ENCODE measurements at regions of chr7 and their contacts with region 1.

Region 1: DNA sequence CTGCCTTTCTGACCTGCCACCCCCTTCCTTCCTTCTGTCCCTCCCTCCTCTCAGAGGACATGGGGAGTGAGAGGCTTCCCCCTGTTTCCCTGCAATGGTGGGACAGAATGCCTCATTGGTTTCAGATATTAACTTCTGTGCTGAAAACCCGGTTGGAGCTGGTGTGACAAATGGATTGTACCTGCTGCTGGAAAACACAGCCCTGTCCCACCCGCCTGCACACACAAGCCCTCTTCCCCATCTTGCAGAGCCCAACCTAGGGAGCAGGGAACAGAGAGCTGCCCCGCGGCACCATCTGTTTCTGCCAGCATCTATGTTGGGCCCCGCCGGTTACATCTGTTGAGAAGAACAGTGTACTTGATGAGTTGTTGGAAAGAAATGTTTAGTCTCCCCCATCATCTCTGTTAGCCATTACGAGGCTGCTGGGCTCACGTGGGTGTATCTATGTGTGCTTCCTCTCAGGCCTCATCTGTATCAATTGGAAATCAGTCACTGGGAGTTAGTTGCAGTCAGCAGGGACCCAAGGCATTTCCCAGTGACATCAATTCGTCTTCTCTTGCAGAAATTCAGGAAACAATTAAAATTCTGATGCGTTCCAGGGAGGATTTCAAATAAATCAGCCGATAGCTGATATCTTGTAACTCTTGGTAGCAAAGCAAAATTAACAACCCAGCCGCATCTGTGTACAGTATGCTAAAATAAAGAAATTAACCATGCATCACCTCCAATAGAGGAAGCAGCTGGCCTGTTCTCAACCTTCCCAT is 725.6 kb upstream of the GALNT17 start:
- DNase-seq: no peak
- ATAC-seq: no peak

Region 2: GRCh38 chr7:68971634-68972340 is 1434.6 kb before region 1 on chr7:
- intact Hi-C with region 1: no loop called
- DNase-seq: no peak
- ATAC-seq: no peak

Region 3: DNA sequence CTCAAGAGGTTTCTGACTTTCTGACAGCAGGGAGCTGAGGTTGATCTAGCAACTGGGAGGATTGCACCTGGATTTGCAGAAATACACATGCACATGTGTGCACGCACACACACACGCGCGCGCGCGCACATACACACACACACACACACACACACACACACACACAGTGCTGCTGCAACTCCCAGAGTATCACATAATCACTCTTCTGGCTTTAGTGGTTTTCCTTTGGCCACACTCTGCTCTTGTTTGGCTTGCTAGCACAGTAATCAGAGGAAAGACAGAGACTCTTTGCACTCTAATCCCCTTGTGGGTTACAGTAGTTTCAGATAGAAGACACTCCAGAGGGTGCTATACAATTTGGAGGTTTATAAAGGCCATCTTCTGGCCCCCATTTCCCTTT is 103.1 kb before region 1 on chr7:
- intact Hi-C with region 1: loop called (anchors 5 kb)
- DNase-seq: no peak
- ATAC-seq: no peak

Region 4: GRCh38 chr7:71077743-71078476 is 671.5 kb after region 1 on chr7:
- intact Hi-C with region 1: loop called (anchors 5 kb)
- DNase-seq: no peak
- ATAC-seq: no peak

Measured in sciatic nerve (tissue), 2 donors.